ENCODE measurements at regions of chr11 and their contacts with region 1.

Region 1: GRCh38 chr11:65134386-65135253 is at the start of gene SYVN1:
- DNase-seq: peak; percentile 90
- ATAC-seq: peak; percentile 92
- H3K4me3 Mint-ChIP-seq: peak within 1 kb of the TSS; percentile 98
- H3K27ac Mint-ChIP-seq: peak within 1 kb of the TSS; percentile 100
- H3K4me1 Mint-ChIP-seq: peaks cover 18% of the 10 kb centered on the region
- H3K27me3 Mint-ChIP-seq: no peaks in the 10 kb centered on the region; the same call in 1 of the 2 replicates
- CTCF ChIP-seq: no peak
- total RNA-seq, gene SYVN1: 27.6 to 34.8 TPM (median 31.8 TPM) in 3 replicates

Region 2: GRCh38 chr11:65117216-65118096 is 17.2 kb before region 1 on chr11 and contains the start of gene ZNHIT2:
- CTCF ChIA-PET with region 1: interaction called, 40 read pairs
- POLR2A ChIA-PET with region 1: interaction called, 15 read pairs
- DNase-seq: peak; percentile 100
- ATAC-seq: peak; percentile 69
- H3K4me3 Mint-ChIP-seq: peak within 1 kb of the TSS; percentile 86
- H3K27ac Mint-ChIP-seq: peak within 1 kb of the TSS; percentile 100
- H3K4me1 Mint-ChIP-seq: peaks cover 22% of the 10 kb centered on the region
- H3K27me3 Mint-ChIP-seq: no peaks in the 10 kb centered on the region
- CTCF ChIP-seq: peak; percentile 91
- total RNA-seq, gene ZNHIT2: 15.9 to 18.3 TPM (median 16.7 TPM) in 3 replicates

Region 3: DNA sequence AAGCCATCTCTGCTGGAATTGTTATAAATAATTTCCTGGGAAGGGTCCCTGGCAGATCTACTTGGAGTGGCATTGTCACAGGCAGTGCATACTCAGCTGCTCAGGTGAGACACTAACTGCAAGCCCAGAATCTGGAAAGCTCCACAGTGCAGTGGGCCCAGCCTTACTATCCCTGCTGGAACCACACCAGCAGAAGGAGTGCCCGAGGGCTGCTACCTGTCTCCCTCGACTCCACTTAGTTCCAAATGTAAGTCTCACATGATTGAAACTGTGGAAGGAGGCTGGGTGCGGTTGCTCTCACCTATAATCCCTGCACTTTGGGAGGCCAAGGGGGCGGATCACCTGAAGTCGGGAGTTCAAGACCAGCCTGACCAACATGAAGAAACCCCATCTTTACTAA is 14.0 kb after region 1 on chr11:
- CTCF ChIA-PET with region 1: interaction called, 12 read pairs
- POLR2A ChIA-PET with region 1: no interaction called
- DNase-seq: no peak
- ATAC-seq: no peak
- H3K4me3 Mint-ChIP-seq: no peak overlapping the region
- H3K27ac Mint-ChIP-seq: no peak overlapping the region
- H3K4me1 Mint-ChIP-seq: no peaks in the 10 kb centered on the region
- H3K27me3 Mint-ChIP-seq: peaks cover 41% of the 10 kb centered on the region
- CTCF ChIP-seq: no peak